Dorsolateral prefrontal cortex (tissue), 120 donors: ENCODE measurements at regions of chr9 and their contacts with region 1.

Region 1: DNA sequence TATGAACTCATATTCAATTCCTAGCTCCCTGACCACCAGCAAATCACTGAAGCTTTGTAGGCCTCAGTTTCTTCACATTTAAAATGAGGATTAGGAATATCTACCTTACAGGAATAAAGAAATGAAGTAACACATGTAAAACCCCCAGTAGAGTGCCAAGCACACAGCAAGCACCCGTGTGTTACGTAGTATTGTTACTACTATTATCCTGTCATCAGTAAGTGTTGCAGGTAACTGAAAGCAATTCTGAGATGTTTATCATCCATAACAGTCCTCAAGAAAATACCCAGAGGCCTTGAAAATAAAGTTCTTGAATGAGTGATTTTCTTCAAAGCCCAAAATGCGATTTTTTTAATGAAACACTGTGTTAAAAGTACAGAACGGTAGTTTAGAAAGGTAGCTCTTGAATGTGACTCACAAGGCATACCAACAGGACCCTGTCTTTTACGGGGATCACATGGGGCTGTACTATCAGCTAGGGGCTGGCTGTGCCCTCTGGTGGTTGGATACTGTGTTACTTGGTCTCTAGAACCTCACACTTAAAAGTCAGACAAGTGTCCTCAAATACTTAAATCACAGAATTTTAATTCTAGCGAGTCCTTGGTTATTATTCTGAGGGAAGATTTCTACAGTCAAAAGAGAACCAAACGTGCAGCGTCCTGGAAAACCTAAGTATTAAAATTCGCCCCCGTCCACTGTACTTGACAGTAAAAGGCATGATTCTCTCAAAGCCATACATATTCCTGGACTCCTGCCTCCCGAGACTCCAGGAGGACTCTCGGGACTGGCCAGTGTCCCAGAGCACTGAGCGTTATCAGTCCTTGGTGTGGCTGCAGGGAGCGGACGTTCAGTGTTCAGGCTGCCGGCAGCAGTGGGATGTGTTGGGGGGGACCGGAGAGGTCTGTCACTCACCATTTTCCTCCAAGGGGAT is 725 bp downstream of the NDUFB6 start:
- DNase-seq: peak in 9 of 10 donors; percentile 35 to 83 (median 62)
- H3K4me3 ChIP-seq: peak overlapping the region; percentile 62 to 100 (median 90)
- H3K27ac ChIP-seq: peak overlapping the region; percentile 54 to 97 (median 90)
- H3K27me3 ChIP-seq: no peaks in the 10 kb centered on the region
- CTCF ChIP-seq: peak in 55 of 56 donors; percentile 44 to 78 (median 65)

Region 2: DNA sequence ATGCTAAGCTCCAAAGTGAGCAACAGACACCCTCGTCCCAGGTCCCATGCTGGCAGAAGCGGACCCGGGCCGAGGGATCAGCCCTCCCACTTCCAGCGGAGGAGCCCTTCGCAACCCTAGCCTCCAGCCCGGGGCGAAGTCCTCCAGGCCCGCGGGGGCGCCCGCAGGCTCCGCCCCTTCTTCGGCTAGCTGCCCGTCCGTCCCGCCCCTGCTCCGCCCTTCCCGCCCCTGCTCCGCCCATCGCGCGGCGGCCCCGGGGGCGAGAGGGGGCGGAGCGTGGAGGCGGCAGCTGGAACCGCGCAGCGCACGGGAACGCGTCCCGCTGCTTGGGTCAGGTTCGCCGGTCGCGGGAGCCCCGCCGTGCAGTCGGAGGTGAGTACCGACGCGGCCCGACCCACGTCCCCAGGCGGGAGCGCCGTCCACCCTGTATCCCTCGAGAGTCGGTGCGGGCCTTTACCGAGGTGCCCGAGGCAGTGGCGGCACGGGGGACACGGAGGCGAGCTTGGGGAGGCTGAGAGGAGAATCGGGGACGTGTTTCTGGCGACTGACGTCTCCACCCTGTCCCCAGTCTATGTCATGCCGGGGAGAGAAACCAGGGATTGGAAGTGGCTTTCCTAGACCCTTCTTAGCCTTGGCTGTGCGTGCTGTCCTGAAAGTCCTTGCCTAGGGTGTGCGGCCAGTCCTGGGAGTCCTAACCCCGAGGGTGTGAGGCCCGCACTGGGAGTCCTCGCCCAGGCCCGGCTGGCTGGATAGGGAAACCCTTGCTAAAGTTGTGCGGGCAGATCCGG is 187.7 kb before region 1 on chr9 and contains the start of gene ACO1:
- intact Hi-C with region 1: loop called in 1 of 2 experiments (anchors 2 kb)
- DNase-seq: peak; percentile 54 to 92 (median 77)
- H3K4me3 ChIP-seq: peak within 1 kb of the TSS; percentile 64 to 98 (median 87)
- H3K27ac ChIP-seq: peak within 1 kb of the TSS in 53 of 59 donors; percentile 7 to 90 (median 66)
- H3K27me3 ChIP-seq: no peaks in the 10 kb centered on the region
- CTCF ChIP-seq: peak in 53 of 56 donors; percentile 12 to 76 (median 43)
- total RNA-seq, gene ACO1: 17.4 to 32.7 (median 23.5) TPM

Region 3: DNA sequence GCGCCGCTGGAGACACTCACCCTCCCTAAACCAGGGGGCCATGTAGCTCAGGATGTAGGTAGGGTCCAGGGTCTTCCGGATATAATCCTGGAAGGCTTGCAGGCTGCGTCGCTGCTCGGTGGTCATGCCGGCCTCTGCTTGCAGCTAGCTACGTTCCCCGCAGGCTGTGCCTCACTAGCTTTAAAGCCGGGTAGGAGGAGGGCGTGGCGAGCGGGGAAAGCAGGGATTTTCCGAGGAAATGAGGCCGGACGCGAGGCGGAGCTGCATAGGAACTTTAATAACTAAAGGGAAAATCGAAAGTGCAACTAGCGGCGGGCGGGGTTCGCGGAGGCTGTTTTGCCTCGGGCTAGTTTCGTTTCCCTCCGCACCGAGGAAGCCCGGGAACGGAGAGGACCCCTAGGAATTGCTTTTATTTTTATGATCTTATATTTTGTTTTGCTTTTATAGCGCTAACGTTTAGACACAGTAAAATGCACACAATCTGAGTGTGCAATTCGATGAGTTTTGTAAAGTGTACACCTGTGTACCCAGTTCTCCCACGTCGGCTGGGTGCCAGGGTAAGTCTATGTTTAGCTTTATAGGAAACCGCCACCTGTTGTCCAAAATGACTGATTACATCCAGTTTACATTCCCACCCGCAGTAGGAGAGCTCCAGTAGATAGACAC is 46.1 kb before region 1 on chr9 and contains the start of gene RIGI:
- intact Hi-C with region 1: loop called in 1 of 2 experiments (anchors 10 kb)
- DNase-seq: peak; percentile 74 to 88 (median 85)
- H3K4me3 ChIP-seq: peak within 1 kb of the TSS; percentile 51 to 95 (median 78)
- H3K27ac ChIP-seq: peak within 1 kb of the TSS; percentile 29 to 95 (median 87)
- H3K27me3 ChIP-seq: no peaks in the 10 kb centered on the region
- CTCF ChIP-seq: peak in 53 of 56 donors; percentile 7 to 73 (median 45)
- total RNA-seq, gene RIGI: 4.1 to 28.6 (median 7.2) TPM

Region 4: DNA sequence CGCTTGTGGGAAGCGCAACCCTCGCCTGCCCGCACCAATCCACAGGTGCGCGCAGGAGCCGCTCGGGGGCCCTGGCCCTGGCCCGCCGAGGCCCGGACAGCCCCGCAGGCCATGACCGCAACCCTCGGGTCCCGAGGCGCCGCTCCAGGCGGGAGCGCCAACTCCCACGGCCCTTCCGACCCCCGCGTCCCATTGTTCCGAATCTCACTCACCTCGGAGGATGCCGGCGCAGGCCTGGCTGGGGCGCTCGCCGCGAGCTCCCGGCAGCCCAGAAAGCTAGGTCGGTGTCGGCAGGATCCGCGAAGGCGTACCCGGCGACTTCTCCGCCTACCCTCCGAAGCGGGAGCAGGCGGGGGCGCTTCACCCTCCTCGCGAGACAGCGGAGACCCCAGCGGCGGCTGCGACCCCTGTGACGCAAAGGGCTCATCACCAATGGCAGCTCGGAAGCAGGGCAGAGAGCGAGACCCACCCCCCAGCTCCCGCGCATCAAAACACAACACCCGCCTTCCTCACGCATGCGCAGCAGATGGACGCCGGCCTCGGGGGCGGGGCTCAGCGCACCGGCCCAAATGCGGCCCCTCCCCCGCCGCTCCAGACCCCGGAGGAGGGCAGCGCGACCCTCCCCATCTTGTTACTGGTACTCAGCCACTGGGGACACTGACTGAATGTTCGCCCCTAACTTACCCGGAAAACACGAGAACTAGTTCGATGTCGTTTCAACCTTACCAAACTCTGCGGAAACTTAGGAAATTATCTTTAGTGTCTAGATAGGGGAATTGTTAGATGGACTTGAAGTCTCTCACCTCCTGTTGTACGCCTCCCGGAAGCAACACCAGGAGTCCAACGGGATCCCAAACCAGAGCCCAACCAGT is 21.4 kb before region 1 on chr9:
- intact Hi-C with region 1: loop called (anchors 1 to 2 kb)
- DNase-seq: peak; percentile 90 to 96 (median 94)
- H3K4me3 ChIP-seq: peak overlapping the region; percentile 58 to 99 (median 89)
- H3K27ac ChIP-seq: peak overlapping the region; percentile 84 to 100 (median 98)
- H3K27me3 ChIP-seq: no peaks in the 10 kb centered on the region
- CTCF ChIP-seq: peak in 35 of 56 donors; percentile 5 to 54 (median 30)

Region 5: GRCh38 chr9:32627394-32627944 is 55.2 kb after region 1 on chr9:
- intact Hi-C with region 1: no loop called
- DNase-seq: no peak
- H3K4me3 ChIP-seq: no peak overlapping the region
- H3K27ac ChIP-seq: no peak overlapping the region
- H3K27me3 ChIP-seq: peaks cover 0 to 3% (median 0%) of the 10 kb centered on the region in 45 donors
- CTCF ChIP-seq: no peak